CD8-positive, alpha-beta T cell (primary cell): ENCODE measurements at regions of chr16 and their contacts with region 1.

Region 1: DNA sequence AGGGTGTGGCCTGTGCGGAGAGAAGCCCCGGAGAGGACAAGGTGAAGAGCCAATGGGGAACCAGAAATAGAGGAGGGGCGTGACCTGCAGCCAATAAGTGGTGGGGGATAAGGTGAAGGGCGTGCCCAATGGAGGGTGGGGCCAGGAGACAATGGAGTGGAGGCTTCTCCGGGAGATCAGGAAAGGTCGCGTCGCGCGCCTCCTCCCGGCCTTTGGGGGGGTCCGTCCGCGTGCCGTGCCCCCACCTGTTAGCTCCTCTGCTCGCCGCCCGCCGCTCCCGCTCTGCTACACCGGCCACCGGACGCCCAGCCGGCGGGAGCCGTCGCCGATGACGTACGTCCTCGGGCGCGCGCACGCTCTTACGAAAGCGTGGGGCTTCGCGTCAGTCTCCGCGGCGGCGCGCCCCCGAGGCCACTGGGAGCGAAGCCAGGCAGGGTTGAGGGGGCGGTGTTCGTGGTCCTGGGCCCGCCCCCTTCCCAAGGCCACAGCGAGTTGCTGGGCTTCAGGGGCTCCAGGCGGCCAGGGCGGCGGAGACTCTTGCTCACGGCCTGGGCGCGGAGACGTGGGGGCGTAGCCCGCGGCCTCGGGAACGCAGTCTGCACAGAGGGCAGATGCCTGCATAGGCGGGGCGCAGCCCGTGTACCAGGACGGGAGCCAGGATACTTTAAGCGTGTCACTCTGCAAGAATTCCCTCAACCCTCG is at the start of gene MATCAP1:
- DNase-seq: peak; percentile 84 to 98 (median 92)
- ATAC-seq: peak; percentile 96
- H3K4me3 ChIP-seq: peak within 1 kb of the TSS; percentile 65 to 76
- H3K4me3 Mint-ChIP-seq: no peak within 1 kb of the TSS
- H3K27ac ChIP-seq: peak within 1 kb of the TSS; percentile 84 to 95
- H3K27ac Mint-ChIP-seq: no peak within 1 kb of the TSS
- H3K4me1 ChIP-seq: peaks cover 20% of the 10 kb centered on the region
- H3K4me1 Mint-ChIP-seq: peaks cover 17% of the 10 kb centered on the region
- H3K27me3 ChIP-seq: peaks cover 0 to 2% of the 10 kb centered on the region in 2 experiments
- H3K27me3 Mint-ChIP-seq: peaks cover 10% of the 10 kb centered on the region
- CTCF ChIP-seq: no peak
- total RNA-seq, gene MATCAP1: 7.7 to 8.0 TPM

Region 2: DNA sequence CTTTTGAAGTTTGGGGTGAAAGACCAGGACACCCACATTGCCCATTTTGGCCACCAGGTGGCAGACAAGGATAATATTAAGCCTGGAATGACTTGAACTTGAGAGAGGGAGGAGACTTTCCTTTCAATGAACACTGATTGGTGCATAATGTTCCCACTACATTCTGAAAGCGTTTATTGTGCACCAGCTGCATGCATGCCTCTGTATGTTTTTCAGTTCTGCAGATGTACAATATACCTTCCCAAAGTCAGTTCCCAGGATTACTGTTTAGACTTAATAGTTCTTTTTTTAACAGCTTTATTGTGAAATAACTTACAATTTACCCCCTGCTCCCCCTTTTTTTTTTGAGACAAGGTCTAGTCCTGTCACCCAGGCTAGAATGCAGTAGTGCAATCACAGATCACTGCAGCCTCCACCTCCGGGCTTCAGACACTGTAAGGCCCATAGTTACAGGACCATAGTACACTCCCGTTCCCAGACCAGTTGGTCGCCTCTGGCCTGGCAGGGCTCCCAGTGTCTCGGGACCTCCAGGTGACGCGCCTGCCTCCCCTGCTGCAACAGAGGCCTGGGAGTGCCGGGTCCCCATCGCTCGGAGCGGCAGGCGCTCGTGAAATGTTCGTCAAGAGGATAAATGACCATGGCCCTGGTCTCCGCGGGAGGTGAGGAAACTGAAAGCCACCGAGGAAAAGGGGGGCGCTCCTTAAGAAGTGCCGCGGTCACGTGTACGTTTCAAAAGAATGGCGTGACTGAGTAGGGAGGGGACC is 236.3 kb before region 1 on chr16:
- CTCF ChIA-PET with region 1: interaction called, 9 read pairs
- POLR2A ChIA-PET with region 1: interaction called, 3 read pairs
- intact Hi-C with region 1: loop called in 1 of 2 experiments (anchors 1 kb)
- DNase-seq: peak; percentile 67 to 90 (median 85)
- ATAC-seq: peak; percentile 94
- H3K4me3 ChIP-seq: peak overlapping the region; percentile 58 to 65
- H3K4me3 Mint-ChIP-seq: peak overlapping the region; percentile 89
- H3K27ac ChIP-seq: no peak overlapping the region
- H3K27ac Mint-ChIP-seq: no peak overlapping the region
- H3K4me1 ChIP-seq: peaks cover 17% of the 10 kb centered on the region
- H3K4me1 Mint-ChIP-seq: peaks cover 19% of the 10 kb centered on the region
- H3K27me3 ChIP-seq: peaks cover 0 to 19% of the 10 kb centered on the region in 2 experiments
- H3K27me3 Mint-ChIP-seq: peaks cover 22% of the 10 kb centered on the region
- CTCF ChIP-seq: peak; percentile 89

Region 3: DNA sequence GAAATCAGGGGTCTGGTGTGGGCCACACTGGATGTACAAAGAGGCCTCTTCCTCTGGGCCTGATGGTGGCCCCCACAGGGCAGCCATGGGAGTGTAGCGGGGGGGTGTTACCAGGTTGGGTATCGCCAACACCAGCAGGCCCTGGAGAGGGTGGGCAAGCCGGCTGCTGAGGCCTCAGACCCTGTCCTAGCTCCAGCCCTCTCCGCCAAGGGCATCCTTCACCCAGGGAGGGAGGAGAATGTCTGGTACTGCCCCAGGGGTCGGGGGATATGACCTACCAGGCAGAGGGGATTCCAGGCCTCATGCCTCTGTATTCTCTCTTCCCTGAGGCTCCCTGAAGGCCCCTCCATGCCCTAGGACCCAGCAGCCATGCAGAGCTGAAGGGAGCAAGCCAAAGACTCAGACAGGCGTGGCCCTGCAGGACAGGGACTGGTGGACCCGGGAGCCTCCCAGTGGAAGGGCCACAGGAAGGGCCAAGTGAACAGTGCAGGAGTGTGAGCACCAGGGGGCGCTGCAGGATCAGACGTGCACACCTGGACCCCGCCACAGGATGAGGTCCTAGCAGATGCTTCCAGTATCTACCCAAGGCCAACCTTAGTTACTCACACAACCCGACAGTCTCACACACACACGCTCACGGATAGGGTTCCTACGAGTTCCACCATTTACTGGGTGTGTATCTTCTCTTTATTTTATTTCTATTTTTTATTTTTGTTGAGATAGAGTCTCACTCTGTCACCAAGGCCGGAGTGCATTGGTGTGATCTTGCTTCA is 206.3 kb before region 1 on chr16:
- CTCF ChIA-PET with region 1: interaction called, 80 read pairs
- POLR2A ChIA-PET with region 1: no interaction called
- intact Hi-C with region 1: loop called (anchors 1 kb)
- DNase-seq: peak; percentile 71 to 95 (median 88)
- ATAC-seq: peak; percentile 99
- H3K4me3 ChIP-seq: no peak overlapping the region
- H3K4me3 Mint-ChIP-seq: no peak overlapping the region
- H3K27ac ChIP-seq: no peak overlapping the region
- H3K27ac Mint-ChIP-seq: no peak overlapping the region
- H3K4me1 ChIP-seq: no peaks in the 10 kb centered on the region
- H3K4me1 Mint-ChIP-seq: peaks cover 11% of the 10 kb centered on the region
- H3K27me3 ChIP-seq: no peaks in the 10 kb centered on the region
- H3K27me3 Mint-ChIP-seq: no peaks in the 10 kb centered on the region
- CTCF ChIP-seq: peak; percentile 92

Region 4: GRCh38 chr16:67028555-67029248 is 155.1 kb before region 1 on chr16 and contains the start of gene CBFB:
- CTCF ChIA-PET with region 1: interaction called, 3 read pairs
- POLR2A ChIA-PET with region 1: no interaction called
- intact Hi-C with region 1: loop called in 1 of 2 experiments (anchors 2 kb)
- DNase-seq: peak; percentile 88 to 98 (median 93)
- ATAC-seq: peak; percentile 83
- H3K4me3 ChIP-seq: peak within 1 kb of the TSS; percentile 74 to 98
- H3K4me3 Mint-ChIP-seq: peak within 1 kb of the TSS; percentile 90
- H3K27ac ChIP-seq: peak within 1 kb of the TSS; percentile 97
- H3K27ac Mint-ChIP-seq: peak within 1 kb of the TSS; percentile 96
- H3K4me1 ChIP-seq: peaks cover 41% of the 10 kb centered on the region
- H3K4me1 Mint-ChIP-seq: peaks cover 42% of the 10 kb centered on the region
- H3K27me3 ChIP-seq: no peaks in the 10 kb centered on the region
- H3K27me3 Mint-ChIP-seq: no peaks in the 10 kb centered on the region
- CTCF ChIP-seq: no peak
- total RNA-seq, gene CBFB: 52.3 to 58.6 TPM

Region 5: GRCh38 chr16:67109407-67110135 is 74.2 kb before region 1 on chr16 and contains the start of gene PHAF1:
- CTCF ChIA-PET with region 1: no interaction called
- POLR2A ChIA-PET with region 1: no interaction called
- intact Hi-C with region 1: loop called in 1 of 2 experiments (anchors 2 kb)
- DNase-seq: peak; percentile 91 to 99 (median 96)
- ATAC-seq: peak; percentile 93
- H3K4me3 ChIP-seq: peak within 1 kb of the TSS; percentile 83 to 92
- H3K4me3 Mint-ChIP-seq: peak within 1 kb of the TSS; percentile 95
- H3K27ac ChIP-seq: peak within 1 kb of the TSS; percentile 26 to 51
- H3K27ac Mint-ChIP-seq: peak within 1 kb of the TSS; percentile 89
- H3K4me1 ChIP-seq: peaks cover 19% of the 10 kb centered on the region
- H3K4me1 Mint-ChIP-seq: peaks cover 32% of the 10 kb centered on the region
- H3K27me3 ChIP-seq: no peaks in the 10 kb centered on the region
- H3K27me3 Mint-ChIP-seq: no peaks in the 10 kb centered on the region
- CTCF ChIP-seq: no peak
- total RNA-seq, gene PHAF1: 9.6 to 9.7 TPM

Region 6: DNA sequence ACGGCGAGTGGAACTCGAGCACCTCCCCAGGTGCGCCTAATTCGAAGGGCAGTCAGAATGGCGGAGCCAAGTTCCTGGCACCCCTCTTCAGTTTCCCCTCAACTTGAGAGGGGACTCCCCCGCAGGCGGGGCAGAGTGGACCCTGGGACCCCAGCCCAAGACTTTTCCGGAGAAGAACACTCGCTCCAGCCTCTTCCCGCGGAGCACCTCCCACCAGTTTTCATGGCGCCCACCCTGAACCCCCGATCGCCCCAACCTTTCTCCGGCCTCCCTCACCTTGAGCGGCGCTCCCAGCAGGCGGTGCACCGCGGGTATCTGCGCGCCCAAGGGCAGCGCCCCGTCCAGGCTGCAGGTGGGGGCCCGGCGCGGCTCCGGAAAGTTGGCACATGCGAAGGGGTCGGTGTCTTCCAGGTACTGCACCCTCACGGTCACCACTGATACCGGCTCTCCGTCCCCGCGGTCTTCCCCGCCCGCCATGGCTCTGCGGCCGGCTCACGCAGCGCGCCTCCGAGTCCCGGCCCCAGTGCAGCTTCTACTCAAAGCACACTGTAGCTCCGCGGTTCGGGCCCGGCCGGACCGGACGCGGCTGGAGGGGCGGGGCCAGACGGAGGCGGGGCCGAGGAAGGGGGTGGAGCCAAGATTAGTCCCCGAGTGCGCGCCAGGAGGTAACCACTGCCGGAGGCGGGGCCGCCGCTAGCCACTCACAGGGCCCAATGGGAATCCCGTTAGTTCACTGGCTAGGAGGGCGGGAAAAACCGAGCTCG is 63.3 kb after region 1 on chr16 and contains the start of gene FHOD1:
- CTCF ChIA-PET with region 1: interaction called, 4 read pairs
- POLR2A ChIA-PET with region 1: no interaction called
- intact Hi-C with region 1: loop called (anchors 2 kb)
- DNase-seq: peak; percentile 86 to 98 (median 96)
- ATAC-seq: peak; percentile 70
- H3K4me3 ChIP-seq: peak within 1 kb of the TSS; percentile 81 to 92
- H3K4me3 Mint-ChIP-seq: peak within 1 kb of the TSS; percentile 88
- H3K27ac ChIP-seq: peak within 1 kb of the TSS; percentile 44 to 86
- H3K27ac Mint-ChIP-seq: peak within 1 kb of the TSS; percentile 82
- H3K4me1 ChIP-seq: peaks cover 47% of the 10 kb centered on the region
- H3K4me1 Mint-ChIP-seq: peaks cover 51% of the 10 kb centered on the region
- H3K27me3 ChIP-seq: peaks cover 0 to 3% of the 10 kb centered on the region in 2 experiments
- H3K27me3 Mint-ChIP-seq: peaks cover 3% of the 10 kb centered on the region
- CTCF ChIP-seq: no peak
- total RNA-seq, gene FHOD1: 15.2 to 18.7 TPM